ENCODE measurements at regions of chr13 and their contacts with region 1.

Region 1: DNA sequence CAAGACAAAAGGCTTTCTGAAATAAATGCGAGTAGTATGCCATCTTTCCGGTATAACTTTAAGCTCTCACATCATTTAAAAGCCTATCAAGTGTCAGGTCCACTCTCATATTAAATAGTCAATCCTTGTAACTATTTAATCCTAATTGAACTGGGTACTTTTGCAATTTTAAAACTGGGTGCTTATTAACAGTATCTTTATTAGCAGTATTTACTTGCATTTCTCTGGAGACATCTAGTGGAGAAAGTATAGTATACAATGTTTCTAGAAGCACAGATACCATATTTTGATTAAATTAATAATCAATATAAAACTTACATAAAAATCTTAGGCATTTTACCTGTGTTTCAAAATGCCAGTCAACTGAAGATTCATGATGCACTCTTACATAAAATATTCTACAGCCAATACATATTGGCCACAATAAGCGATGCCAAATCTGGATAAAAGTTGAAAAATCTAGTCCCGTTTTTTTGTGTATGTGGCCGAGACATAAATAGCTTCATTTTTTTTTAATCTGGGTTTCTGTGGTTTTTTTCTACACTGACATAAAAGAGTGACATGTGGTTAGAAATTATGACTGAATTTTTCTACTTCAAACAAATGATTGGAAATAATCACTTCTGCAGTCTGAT is 4.3 kb upstream of the POSTN start:
- DNase-seq: no peak
- H3K4me3 ChIP-seq: no peak overlapping the region
- H3K27me3 ChIP-seq: no peaks in the 10 kb centered on the region
- CTCF ChIP-seq: peak; percentile 45; the same call in 1 of the 2 replicates

Region 2: DNA sequence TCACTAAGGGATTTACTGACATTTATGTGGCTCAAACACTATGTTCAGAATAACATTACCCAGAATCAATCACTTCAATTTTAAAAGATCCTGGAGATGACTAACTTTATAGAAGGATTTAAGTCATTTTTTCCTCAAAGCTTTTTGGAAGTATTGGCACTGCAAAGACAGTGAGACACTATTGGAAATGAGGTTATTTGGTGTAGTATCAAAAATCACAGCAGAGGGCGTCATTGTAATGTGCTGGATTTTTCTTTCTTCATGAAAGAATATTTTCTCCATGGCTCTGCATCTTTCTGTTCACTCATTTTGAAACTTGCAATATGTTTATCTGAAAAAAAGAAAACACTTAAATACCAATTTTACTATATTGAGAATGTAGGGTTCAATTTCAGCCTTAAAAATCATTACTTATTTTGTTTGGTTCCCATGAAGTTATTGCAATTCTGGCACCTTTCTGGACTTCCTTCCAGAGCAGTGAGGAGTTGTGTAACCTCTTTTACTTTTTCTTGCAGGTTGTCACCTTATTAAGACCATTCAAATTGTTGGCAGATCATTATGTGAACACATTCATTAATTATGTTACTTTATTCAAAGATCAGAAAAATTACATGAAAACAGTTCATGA is 493.7 kb before region 1 on chr13:
- CTCF ChIA-PET with region 1: interaction called, 51 read pairs
- POLR2A ChIA-PET with region 1: no interaction called
- DNase-seq: no peak
- H3K4me3 ChIP-seq: no peak overlapping the region
- H3K27me3 ChIP-seq: no peaks in the 10 kb centered on the region
- CTCF ChIP-seq: peak; percentile 65